AG04450 (cell line): ENCODE measurements at regions of chr4 and their contacts with region 1.

Region 1: DNA sequence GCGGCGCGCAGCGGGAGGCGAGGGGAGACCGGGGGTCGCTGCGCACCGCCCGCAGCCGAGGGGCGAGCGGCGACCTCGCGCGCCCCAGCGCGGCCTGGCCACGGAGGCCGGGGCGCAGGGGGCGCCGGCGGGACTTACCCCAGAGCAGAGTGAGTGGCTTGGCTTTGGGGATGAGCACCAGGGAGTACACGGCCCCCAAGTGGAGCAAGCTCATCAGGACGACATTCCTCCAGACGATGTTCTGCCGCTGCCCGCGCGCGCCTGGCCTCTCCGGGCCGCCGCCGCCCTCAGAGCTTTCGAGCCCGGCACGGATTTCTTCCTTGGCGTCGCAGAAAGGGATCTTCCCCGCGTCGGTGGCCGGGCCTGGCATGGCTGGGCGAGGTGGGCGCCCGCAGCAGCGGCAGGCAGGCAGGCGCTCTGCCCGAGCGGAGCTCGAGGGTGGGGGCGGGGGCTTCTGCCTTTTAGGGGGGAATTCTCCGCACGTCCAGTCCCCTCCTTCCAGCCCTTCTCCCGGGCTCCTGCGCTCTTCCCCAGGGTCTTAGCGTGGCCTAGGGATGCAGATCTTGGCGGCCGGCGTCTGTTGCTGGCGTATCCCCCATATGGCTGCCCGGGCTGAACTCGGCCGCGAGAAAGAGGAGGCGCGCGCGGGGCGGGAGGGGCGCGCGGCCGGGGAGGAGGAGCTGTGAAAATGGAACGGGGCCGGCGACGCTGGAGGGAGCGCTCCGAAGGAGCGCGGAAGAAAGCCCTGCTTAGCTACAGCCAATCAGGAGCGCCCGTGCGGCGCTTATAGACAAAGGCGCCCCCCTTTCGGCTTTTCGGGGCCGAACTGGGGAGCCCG is at the start of gene SCD5:
- DNase-seq: peak; percentile 49
- H3K4me3 ChIP-seq: peak within 1 kb of the TSS; percentile 73
- H3K27ac ChIP-seq: peak within 1 kb of the TSS; percentile 31
- H3K27me3 ChIP-seq: peaks cover 6% of the 10 kb centered on the region
- CTCF ChIP-seq: 0 out of 2 replicates have a peak, but pooled peaks have one; percentile 8
- polyA plus RNA-seq, gene SCD5: 11.9 and 13.1 TPM in 2 replicates

Region 2: DNA sequence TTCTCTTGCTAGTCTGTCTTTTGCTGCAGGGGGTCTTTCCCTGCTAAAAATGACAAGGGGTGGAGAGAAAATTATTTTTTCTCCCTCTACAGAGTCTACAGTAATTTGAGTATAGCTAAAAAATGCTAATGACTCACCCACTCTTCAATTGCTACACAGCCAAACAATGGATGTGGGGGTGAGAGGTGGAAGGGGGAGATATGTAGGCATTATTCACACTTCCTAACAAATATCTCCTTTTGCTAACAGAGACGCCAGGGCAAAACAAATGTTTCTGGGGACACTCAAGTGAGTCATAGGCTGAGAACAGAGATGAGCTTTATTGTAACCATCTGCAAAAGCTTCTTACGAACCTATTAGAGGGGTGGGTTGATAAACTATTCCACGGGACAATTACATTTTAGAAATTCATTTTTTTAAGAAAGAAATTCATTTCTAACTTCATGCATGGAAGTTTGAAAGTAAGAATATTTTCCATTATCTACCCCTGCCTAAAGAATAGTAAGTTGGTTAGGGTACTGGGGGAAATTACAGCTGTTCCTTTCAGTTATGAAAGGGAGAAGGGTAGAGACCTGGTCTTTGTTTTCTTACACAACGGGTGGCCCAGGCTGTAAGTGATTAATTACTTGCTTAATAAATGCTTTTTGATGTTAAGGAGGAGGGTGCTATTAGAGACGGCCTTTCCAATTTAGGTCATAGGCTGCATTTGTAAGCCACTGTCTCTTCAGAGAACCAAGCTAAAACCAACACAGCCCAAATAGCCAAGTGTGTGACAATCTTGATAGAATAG is 12.6 kb before region 1 on chr4:
- CTCF ChIA-PET with region 1: interaction called, 5 read pairs
- POLR2A ChIA-PET with region 1: interaction called, 11 read pairs
- DNase-seq: peak; percentile 13
- H3K4me3 ChIP-seq: no peak overlapping the region; the same call in 1 of the 2 replicates
- H3K27ac ChIP-seq: no peak overlapping the region
- H3K27me3 ChIP-seq: peaks cover 2% of the 10 kb centered on the region
- CTCF ChIP-seq: no peak

Region 3: DNA sequence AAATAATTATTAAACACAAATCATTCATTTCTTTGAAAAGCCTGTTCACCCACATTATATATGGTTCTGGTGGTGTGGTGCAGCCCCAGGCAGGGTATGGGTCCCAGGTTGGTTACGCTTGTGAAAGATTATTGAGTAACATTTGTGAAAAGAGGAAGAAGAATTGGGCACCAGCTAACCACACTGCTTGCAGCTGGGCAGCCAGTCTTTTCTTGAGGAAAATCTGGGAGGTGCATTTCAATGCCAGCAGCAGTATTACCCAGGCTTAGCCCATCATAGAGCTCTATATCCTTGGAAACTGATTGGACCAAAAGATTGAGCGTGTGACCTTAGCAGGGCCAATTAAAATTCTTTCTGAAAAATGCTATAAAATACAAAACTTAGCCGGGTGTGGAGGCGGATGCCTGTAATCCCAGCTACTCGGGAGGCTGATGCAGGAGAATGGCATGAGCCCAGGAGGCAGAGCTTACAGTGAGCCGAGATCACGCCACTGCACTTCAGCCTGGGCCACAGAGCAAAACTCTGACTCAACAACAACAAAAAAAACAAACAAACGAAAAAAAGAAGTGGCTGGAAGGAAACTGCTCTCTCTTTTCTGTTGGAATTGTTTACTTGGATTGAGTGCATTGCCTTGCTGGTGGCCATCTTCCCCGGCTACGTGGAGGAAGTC is 325.9 kb after region 1 on chr4:
- CTCF ChIA-PET with region 1: no interaction called
- POLR2A ChIA-PET with region 1: no interaction called
- DNase-seq: no peak
- H3K4me3 ChIP-seq: no peak overlapping the region
- H3K27ac ChIP-seq: no peak overlapping the region
- H3K27me3 ChIP-seq: no peaks in the 10 kb centered on the region
- CTCF ChIP-seq: no peak